ENCODE measurements at regions of chr14 and their contacts with region 1.

Region 1: GRCh38 chr14:75063407-75064213 is at the start of gene ACYP1:
- DNase-seq: peak; percentile 89 to 94
- ATAC-seq: peak; percentile 92
- H3K4me3 ChIP-seq: peak within 1 kb of the TSS; percentile 66 to 88 (median 78)
- H3K27ac ChIP-seq: peak within 1 kb of the TSS; percentile 74 to 84 (median 81)
- H3K4me1 ChIP-seq: peaks cover 33 to 36% of the 10 kb centered on the region in 2 donors
- H3K27me3 ChIP-seq: no peaks in the 10 kb centered on the region
- CTCF ChIP-seq: no peak
- POLR2A ChIP-seq: no peak
- total RNA-seq, gene ACYP1: 12.8 to 41.2 (median 22.9) TPM

Region 2: GRCh38 chr14:74932401-74932901 is 131.2 kb before region 1 on chr14:
- in situ Hi-C with region 1: no loop called
- intact Hi-C with region 1: no loop called
- DNase-seq: peak; percentile 45 to 54
- ATAC-seq: peak; percentile 57 to 69
- H3K4me3 ChIP-seq: no peak overlapping the region
- H3K27ac ChIP-seq: peak overlapping the region; percentile 9 to 74 (median 56)
- H3K4me1 ChIP-seq: peaks cover 23 to 32% of the 10 kb centered on the region in 2 donors
- H3K27me3 ChIP-seq: no peaks in the 10 kb centered on the region
- CTCF ChIP-seq: no peak
- POLR2A ChIP-seq: no peak

Region 3: DNA sequence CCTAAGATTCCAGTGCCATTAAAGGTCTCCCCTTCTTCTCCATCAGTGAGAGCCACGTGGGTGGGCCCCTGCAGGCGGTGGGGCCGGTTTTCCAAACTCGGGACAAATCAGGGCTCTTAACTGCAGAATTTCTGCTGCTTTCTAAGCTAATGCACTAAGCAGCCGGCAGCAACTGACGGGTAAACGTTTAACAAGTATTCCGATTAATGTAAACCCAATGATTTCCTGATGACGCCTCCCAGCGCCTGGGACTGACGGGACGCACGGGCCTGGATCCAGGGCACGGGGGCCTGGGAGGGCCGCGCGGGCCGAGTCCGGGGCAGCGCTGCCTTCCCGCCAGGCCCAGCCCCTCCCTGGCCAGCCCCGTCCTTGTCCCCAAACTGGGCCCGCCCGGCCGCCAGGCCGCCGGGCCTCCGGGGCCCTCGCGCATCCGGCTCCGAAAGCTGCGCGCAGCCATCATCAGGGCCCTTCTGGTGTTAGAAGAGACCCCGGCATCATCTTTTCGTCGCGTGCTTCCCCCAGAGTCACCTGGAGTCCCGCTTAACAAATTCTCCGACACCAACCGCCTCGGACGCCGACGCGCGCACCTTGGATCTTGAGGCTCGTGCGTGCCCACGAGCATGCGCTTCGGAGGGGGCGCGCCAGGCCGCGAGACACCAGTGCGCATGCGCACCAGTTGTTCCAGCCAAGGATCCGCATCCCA is 12.6 kb before region 1 on chr14 and contains the start of gene MLH3:
- in situ Hi-C with region 1: no loop called
- intact Hi-C with region 1: loop called (anchors 2 kb)
- DNase-seq: peak; percentile 63 to 77
- ATAC-seq: peak; percentile 85 to 87
- H3K4me3 ChIP-seq: peak within 1 kb of the TSS; percentile 45 to 77 (median 60)
- H3K27ac ChIP-seq: peak within 1 kb of the TSS; percentile 81 to 91 (median 88)
- H3K4me1 ChIP-seq: peaks cover 21 to 36% of the 10 kb centered on the region in 2 donors
- H3K27me3 ChIP-seq: no peaks in the 10 kb centered on the region
- CTCF ChIP-seq: no peak
- POLR2A ChIP-seq: peak; percentile 63 to 69
- total RNA-seq, gene MLH3: 10.4 to 21.7 (median 17.4) TPM

Region 4: DNA sequence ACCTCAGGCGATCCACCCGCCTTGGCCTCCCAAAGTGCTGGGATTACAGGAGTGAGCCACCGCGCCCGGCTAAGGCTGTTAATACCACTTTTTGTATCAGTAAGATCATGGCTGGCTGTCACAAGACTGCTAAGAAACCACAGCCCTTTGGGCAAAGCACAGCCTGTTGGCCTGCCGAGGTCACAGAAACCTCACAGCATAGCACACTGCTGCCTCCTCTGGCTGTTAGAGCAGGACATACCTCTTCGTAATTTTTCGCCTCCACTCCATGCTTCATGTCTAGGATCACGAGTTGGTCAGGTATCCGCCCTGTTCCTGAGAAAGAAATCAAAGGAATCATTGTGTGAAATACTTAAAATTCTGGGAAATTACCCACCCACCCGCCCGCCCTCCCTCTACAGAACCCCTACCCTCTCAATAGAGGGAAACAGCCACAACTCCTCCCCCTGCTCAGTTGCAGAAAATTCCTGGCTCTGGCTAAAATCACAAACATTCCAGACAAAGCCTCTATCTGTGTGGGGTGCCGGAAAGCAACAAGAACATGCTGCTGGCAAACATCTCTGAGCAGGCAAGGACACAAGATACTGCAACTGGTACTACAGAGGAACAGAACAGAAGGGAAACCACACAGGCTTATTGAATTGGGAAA is 83.9 kb after region 1 on chr14:
- in situ Hi-C with region 1: no loop called
- intact Hi-C with region 1: no loop called
- DNase-seq: peak; percentile 75 to 80
- ATAC-seq: peak; percentile 38 to 49
- H3K4me3 ChIP-seq: peak overlapping the region in 1 of 4 donors; percentile 15
- H3K27ac ChIP-seq: peak overlapping the region; percentile 89 to 95 (median 92)
- H3K4me1 ChIP-seq: peaks cover 81 to 83% of the 10 kb centered on the region in 2 donors
- H3K27me3 ChIP-seq: no peaks in the 10 kb centered on the region
- CTCF ChIP-seq: peak in 2 of 5 experiments; percentile 21 to 29
- POLR2A ChIP-seq: peak in 1 of 2 donors; percentile 11

Region 5: GRCh38 chr14:75223664-75224154 is 160.1 kb after region 1 on chr14:
- in situ Hi-C with region 1: no loop called
- intact Hi-C with region 1: no loop called
- DNase-seq: peak in 1 of 2 donors; percentile 42
- ATAC-seq: no peak
- H3K4me3 ChIP-seq: no peak overlapping the region
- H3K27ac ChIP-seq: no peak overlapping the region
- H3K4me1 ChIP-seq: no peaks in the 10 kb centered on the region
- H3K27me3 ChIP-seq: no peaks in the 10 kb centered on the region
- CTCF ChIP-seq: no peak
- POLR2A ChIP-seq: no peak